Activated T-helper 1 cell treated with anti-CD3 and anti-CD28 coated beads, Interleukin-12 subunit alpha, Interleukin-12 subunit beta, Interleukin-2, Interleukin-4 antibody, amounts not matched to agents 30 ng/mL and 10 ng/mL and 1 ng/mL, durations not matched to agents 14 hours and 24 hours and 36 hours (primary cell): ENCODE measurements at regions of chr4 and their contacts with region 1.

Region 1: GRCh38 chr4:166941629-166942028 is 292.7 kb downstream of the SPOCK3 start:
- DNase-seq: no peak
- H3K4me3 Mint-ChIP-seq: no peak overlapping the region
- H3K27ac Mint-ChIP-seq: no peak overlapping the region
- H3K4me1 Mint-ChIP-seq: no peaks in the 10 kb centered on the region
- H3K27me3 Mint-ChIP-seq: no peaks in the 10 kb centered on the region

Region 2: DNA sequence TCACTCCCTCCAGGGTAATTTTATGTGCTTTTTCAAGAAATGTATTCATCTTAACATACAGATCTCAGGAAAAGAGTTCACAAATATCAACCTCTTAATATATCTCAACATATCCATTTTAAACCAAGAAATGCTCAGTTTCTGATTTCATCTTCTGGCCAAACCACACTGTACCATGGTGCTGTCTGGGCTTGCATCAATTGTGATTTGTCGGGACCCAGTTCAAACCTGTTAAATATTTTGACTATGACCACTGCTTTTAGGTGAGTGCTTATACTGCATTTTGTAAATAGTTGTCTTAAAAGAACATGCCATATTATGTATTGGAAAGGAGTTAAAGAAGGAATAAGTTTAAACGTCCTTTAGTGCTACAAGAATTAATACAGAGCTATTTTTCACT is 59.4 kb before region 1 on chr4:
- intact Hi-C with region 1: no loop called
- DNase-seq: no peak
- H3K4me3 Mint-ChIP-seq: no peak overlapping the region
- H3K27ac Mint-ChIP-seq: no peak overlapping the region
- H3K4me1 Mint-ChIP-seq: no peaks in the 10 kb centered on the region
- H3K27me3 Mint-ChIP-seq: no peaks in the 10 kb centered on the region

Region 3: GRCh38 chr4:166913926-166914325 is 27.7 kb before region 1 on chr4:
- intact Hi-C with region 1: loop called (anchors 1 kb)
- DNase-seq: no peak
- H3K4me3 Mint-ChIP-seq: no peak overlapping the region
- H3K27ac Mint-ChIP-seq: no peak overlapping the region
- H3K4me1 Mint-ChIP-seq: no peaks in the 10 kb centered on the region
- H3K27me3 Mint-ChIP-seq: no peaks in the 10 kb centered on the region